H1 (cell line): ENCODE measurements at regions of chr17 and their contacts with region 1.

Region 1: GRCh38 chr17:67293251-67294203 is 48.5 kb upstream of the HELZ start:
- DNase-seq: peak; percentile 57 to 79
- H3K4me3 ChIP-seq: no peak overlapping the region
- H3K27ac ChIP-seq: no peak overlapping the region
- H3K4me1 ChIP-seq: peaks cover 0 to 7% (median 0%) of the 10 kb centered on the region in 4 experiments; a peak in 1 of 7 replicates
- H3K27me3 ChIP-seq: no peaks in the 10 kb centered on the region
- CTCF ChIP-seq: peak; percentile 81 to 90 (median 83)
- EP300 ChIP-seq: no peak
- POLR2A ChIP-seq: no peak
- RAD21 ChIP-seq: peak; percentile 73 to 81

Region 2: DNA sequence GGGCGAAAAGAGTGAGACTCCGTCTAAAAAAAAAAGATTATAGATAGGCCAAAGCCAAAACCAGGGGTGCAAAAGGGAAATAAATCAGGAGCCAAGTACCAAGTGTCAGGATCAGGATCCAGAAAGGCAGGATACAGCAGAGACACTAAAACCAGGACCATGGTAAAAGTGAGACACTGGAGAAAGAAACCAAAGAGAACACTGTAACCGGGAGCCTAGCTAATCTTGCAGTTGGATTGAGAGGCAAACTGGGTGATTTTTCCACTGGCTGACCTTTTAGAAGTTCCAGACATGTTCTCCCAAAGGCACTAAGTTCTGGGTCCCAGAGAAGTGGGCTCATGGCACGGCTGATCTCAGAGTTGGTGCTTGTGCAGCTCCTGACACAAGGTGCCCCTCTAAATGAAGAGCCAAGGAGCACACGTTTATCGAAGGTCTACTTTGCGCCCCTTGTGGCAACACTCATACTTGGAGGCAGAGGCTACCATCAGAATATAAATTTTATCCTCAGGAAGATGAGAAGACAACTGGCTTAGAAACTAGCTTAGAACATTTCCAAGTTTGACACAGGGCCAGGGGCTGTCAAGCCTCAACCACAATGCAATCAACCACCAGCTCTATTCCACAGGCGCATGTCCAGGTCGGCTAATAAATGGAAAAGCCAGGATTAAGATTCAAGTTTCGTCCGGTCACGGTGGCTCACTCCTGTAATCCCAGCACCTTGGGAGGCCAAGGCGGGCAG is 21.0 kb before region 1 on chr17:
- CTCF ChIA-PET with region 1: interaction called, 253 read pairs
- POLR2A ChIA-PET with region 1: no interaction called
- DNase-seq: peak in 1 of 2 experiments; percentile 62
- H3K4me3 ChIP-seq: no peak overlapping the region
- H3K27ac ChIP-seq: no peak overlapping the region
- H3K4me1 ChIP-seq: no peaks in the 10 kb centered on the region
- H3K27me3 ChIP-seq: no peaks in the 10 kb centered on the region
- CTCF ChIP-seq: peak; percentile 47 to 79 (median 58)
- EP300 ChIP-seq: no peak
- POLR2A ChIP-seq: no peak
- RAD21 ChIP-seq: peak; percentile 37 to 50

Region 3: DNA sequence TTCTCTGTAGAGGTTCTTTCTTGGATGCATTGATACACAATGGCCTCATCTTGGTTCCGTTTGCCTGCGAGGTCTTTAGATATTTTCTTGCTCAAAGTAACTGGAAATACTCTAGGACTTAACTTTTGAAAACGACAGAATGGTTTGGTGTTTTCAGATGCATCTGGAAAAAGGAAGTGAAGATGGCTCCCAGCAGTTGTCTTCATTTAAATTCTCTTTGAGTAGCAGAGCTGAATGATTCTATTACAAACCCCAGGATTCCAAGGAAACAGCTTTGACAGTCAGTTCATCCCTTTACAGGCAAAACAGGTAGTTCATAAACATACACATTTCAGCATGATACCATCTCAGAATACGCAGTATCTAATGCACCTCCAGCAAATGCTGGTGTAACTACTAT is 18.0 kb after region 1 on chr17:
- CTCF ChIA-PET with region 1: interaction called, 17 read pairs
- POLR2A ChIA-PET with region 1: no interaction called
- DNase-seq: no peak
- H3K4me3 ChIP-seq: no peak overlapping the region
- H3K27ac ChIP-seq: no peak overlapping the region
- H3K4me1 ChIP-seq: peaks cover 0 to 4% (median 0%) of the 10 kb centered on the region in 4 experiments; a peak in 1 of 7 replicates
- H3K27me3 ChIP-seq: no peaks in the 10 kb centered on the region
- CTCF ChIP-seq: no peak
- EP300 ChIP-seq: no peak
- POLR2A ChIP-seq: no peak
- RAD21 ChIP-seq: no peak

Region 4: DNA sequence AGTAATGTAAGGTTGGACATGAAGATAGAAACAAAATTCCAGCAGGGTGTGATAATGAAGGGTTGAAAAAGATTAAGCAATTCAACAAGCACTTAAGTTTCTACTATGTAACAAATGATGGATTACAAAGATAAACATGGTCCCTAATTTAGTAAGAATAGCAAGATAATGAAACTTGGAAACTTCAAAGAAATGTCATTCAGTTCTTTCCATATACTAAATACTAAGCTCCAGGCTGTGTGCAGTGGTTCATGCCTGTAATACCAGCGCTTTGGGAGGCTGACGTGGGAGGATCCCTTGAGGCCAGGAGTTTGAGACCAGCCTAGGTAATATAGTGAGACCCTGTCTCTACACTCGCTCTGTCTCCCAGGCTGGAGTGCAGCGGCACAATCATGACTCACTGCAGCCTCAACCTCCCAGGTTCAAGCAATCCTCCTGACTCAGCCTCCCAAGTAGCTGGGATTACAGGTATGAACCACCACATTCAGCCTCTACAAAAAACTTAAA is 41.9 kb after region 1 on chr17:
- CTCF ChIA-PET with region 1: interaction called, 21 read pairs
- POLR2A ChIA-PET with region 1: no interaction called
- DNase-seq: peak in 1 of 2 experiments; percentile 28
- H3K4me3 ChIP-seq: no peak overlapping the region
- H3K27ac ChIP-seq: no peak overlapping the region
- H3K4me1 ChIP-seq: no peaks in the 10 kb centered on the region
- H3K27me3 ChIP-seq: no peaks in the 10 kb centered on the region
- CTCF ChIP-seq: no peak
- EP300 ChIP-seq: no peak
- POLR2A ChIP-seq: no peak
- RAD21 ChIP-seq: no peak